B cell (primary cell): ENCODE measurements at regions of chr11 and their contacts with region 1.

Region 1: DNA sequence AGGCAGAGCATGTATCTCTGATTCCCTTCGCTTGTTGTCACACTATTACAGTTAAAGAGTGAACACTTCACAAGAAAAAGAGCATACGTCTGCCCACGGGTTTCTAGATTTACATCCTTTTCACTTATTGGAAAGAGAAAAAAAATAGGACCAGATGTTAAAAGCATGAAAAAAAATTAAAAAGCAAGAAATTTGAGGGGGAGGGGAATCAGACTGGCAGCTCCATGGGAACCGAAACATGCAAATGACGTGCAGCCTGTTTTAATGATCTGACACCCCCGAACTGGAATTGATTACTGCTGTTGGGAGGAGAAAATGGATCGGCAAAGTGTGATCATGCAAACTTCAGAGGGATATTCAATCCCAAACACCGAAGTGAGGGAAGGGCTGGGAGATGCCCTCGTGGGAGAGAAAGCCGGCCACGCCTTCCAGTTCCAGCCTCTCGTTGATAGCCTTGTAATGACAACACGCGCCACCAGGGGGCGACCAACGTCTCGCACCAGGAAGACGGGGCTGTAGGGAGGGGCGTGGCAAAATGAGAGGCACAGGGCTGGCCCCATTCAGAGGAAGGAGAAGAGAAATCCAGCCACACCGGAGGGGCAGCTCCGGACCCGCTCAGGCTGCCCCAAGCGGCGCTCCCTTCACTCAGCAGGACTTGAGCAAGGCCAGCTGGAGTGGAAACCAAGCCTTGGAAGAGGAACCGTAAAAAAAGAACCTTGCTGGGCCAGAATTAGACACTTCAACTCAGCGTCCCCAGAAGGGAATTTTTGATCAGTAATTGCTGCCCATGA is 53.8 kb upstream of the SYT13 start:
- DNase-seq: peak; percentile 93
- ATAC-seq: peak; percentile 100
- H3K4me3 ChIP-seq: peak overlapping the region; percentile 23 to 65 (median 50)
- H3K4me3 Mint-ChIP-seq: peak overlapping the region; percentile 92
- H3K27ac ChIP-seq: no peak overlapping the region
- H3K27ac Mint-ChIP-seq: peak overlapping the region; percentile 76
- H3K4me1 ChIP-seq: peaks cover 8 to 13% of the 10 kb centered on the region in 2 donors
- H3K4me1 Mint-ChIP-seq: peaks cover 18% of the 10 kb centered on the region
- H3K27me3 ChIP-seq: peaks cover 0 to 4% (median 2%) of the 10 kb centered on the region in 4 experiments
- H3K27me3 Mint-ChIP-seq: peaks cover 26% of the 10 kb centered on the region
- CTCF ChIP-seq: peak; percentile 90

Region 2: DNA sequence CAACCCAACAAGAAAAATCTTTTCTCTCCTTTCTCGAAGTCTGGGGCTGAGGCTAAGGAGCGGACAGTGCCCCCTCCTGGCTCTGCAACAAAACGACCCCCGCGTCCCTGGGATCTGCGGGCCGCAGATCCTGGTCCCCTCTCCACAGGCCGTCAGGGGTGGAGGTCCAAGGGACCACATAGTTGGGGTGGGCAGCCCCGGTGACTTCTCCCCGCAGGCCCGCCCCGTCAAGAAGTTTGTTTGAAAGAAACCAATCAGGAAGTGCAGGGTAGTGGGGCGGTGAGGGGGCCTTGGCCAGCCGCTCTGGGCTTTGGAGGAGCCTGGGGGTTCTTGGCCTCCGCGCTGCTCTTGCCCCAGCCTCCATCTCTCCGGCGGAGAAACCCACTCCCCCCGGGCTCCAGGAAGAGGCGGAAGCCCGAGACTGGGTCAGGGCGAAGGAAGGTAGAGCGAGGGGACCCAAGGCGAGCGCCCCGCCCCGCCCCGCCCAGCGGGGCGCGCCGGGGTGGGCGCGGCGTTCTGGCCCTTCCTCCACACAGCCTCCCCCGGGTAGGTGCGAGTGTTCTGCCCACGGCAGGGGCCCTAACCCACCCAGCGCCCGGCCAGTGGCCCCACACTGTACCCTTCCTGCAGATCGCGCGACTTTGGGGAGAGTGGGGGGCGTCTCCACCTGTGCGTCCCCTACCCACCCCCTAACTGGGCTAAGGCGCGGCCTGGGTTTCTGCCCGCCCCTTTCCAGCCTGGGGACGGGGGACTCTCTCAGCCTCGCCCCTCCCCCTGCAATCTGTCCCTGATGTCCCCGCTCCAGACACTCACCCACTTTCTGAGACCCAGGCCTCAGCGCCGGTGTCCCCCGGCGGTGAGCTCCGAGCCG is 390.5 kb before region 1 on chr11:
- CTCF ChIA-PET with region 1: no interaction called
- POLR2A ChIA-PET with region 1: no interaction called
- intact Hi-C with region 1: no loop called
- DNase-seq: peak; percentile 71
- ATAC-seq: peak; percentile 52
- H3K4me3 ChIP-seq: peak overlapping the region; percentile 51 to 97 (median 83)
- H3K4me3 Mint-ChIP-seq: peak overlapping the region; percentile 89
- H3K27ac ChIP-seq: peak overlapping the region; percentile 64 to 85
- H3K27ac Mint-ChIP-seq: peak overlapping the region; percentile 72
- H3K4me1 ChIP-seq: peaks cover 27 to 41% of the 10 kb centered on the region in 2 donors
- H3K4me1 Mint-ChIP-seq: peaks cover 72% of the 10 kb centered on the region
- H3K27me3 ChIP-seq: no peaks in the 10 kb centered on the region
- H3K27me3 Mint-ChIP-seq: no peaks in the 10 kb centered on the region
- CTCF ChIP-seq: peak; percentile 81

Region 3: DNA sequence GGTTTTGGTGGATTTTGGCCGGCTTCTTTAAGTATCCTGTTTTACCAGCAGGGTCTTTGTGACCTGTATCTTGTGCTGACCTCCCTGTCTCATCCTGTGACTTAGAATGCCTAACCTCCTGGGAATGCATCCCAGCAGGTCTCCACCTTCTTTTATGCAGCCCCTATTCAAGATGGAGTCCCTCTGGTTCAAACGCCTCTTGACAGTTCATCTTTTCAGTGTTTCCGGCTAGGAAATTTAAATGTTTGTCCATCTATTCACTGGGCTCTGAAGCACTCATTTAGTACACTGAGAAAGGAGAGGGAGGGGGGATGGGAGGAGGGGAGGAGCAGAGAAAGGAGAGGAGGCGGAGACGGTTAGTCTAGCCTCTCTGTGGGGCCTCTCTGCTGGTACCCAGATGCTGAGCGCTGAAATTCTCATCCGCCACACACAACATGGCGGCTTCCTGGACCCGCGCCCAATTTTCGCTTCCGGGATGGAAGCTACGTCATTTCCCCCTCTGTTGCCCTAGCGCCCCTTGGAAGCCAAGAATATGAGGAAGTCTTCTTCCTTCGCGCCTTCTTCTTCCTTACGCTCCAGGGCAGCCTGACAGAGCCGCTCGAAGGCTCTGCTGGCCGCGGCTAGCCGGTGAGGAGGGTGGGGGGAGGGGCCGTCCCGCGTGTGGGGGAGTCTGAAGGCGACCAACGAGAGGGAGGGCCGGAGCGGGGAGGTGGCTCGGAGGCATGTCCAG is 15.2 kb after region 1 on chr11:
- CTCF ChIA-PET with region 1: interaction called, 16 read pairs
- POLR2A ChIA-PET with region 1: no interaction called
- intact Hi-C with region 1: loop called (anchors 1 kb)
- DNase-seq: peak; percentile 94
- ATAC-seq: peak; percentile 96
- H3K4me3 ChIP-seq: peak overlapping the region; percentile 22 to 68 (median 63)
- H3K4me3 Mint-ChIP-seq: peak overlapping the region; percentile 83
- H3K27ac ChIP-seq: peak overlapping the region; percentile 43 to 64
- H3K27ac Mint-ChIP-seq: peak overlapping the region; percentile 90
- H3K4me1 ChIP-seq: peaks cover 13 to 17% of the 10 kb centered on the region in 2 donors
- H3K4me1 Mint-ChIP-seq: peaks cover 15% of the 10 kb centered on the region
- H3K27me3 ChIP-seq: peaks cover 0 to 6% (median 0%) of the 10 kb centered on the region in 4 experiments
- H3K27me3 Mint-ChIP-seq: peaks cover 30% of the 10 kb centered on the region
- CTCF ChIP-seq: no peak

Region 4: GRCh38 chr11:45655347-45655756 is 315.4 kb after region 1 on chr11:
- CTCF ChIA-PET with region 1: interaction called, 4 read pairs
- POLR2A ChIA-PET with region 1: no interaction called
- intact Hi-C with region 1: loop called (anchors 1 kb)
- DNase-seq: peak; percentile 58
- ATAC-seq: no peak
- H3K4me3 ChIP-seq: no peak overlapping the region
- H3K4me3 Mint-ChIP-seq: no peak overlapping the region
- H3K27ac ChIP-seq: no peak overlapping the region
- H3K27ac Mint-ChIP-seq: no peak overlapping the region
- H3K4me1 ChIP-seq: peaks cover 0 to 3% of the 10 kb centered on the region in 2 donors
- H3K4me1 Mint-ChIP-seq: no peaks in the 10 kb centered on the region
- H3K27me3 ChIP-seq: peaks cover 0 to 18% (median 4%) of the 10 kb centered on the region in 4 experiments
- H3K27me3 Mint-ChIP-seq: peaks cover 47% of the 10 kb centered on the region
- CTCF ChIP-seq: peak; percentile 91